ENCODE measurements at regions of chr14 and their contacts with region 1.

Region 1: GRCh38 chr14:54773171-54773975 is 129.3 kb downstream of the GCH1 start:
- DNase-seq: peak; percentile 93
- ATAC-seq: peak; percentile 83
- H3K4me3 Mint-ChIP-seq: peak overlapping the region; percentile 16
- H3K27ac Mint-ChIP-seq: peak overlapping the region; percentile 79
- H3K4me1 Mint-ChIP-seq: peaks cover 47% of the 10 kb centered on the region
- H3K27me3 Mint-ChIP-seq: peaks cover 9% of the 10 kb centered on the region
- CTCF ChIP-seq: no peak

Region 2: DNA sequence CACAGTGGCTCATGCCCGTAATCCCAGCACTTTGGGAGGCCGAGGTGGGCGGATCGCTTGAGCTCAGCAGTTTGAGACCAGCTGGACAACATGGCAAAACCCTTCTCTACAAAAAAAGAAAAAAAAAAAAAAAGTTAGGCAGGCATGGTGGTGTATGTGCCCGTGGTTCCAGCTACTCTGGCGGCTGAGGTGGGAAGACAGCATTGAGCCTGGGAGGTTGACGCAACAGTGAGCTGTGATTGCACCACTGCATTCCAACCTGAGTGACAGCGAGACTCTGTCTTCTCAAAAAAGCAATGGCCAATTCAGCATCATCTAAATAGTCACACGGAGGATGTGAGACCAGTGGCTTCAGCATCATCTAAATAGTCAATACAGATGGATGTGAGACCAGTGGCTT is 216.8 kb before region 1 on chr14:
- CTCF ChIA-PET with region 1: interaction called, 247 read pairs
- POLR2A ChIA-PET with region 1: no interaction called
- intact Hi-C with region 1: no loop called
- DNase-seq: no peak
- ATAC-seq: no peak
- H3K4me3 Mint-ChIP-seq: no peak overlapping the region
- H3K27ac Mint-ChIP-seq: no peak overlapping the region
- H3K4me1 Mint-ChIP-seq: no peaks in the 10 kb centered on the region
- H3K27me3 Mint-ChIP-seq: peaks cover 6% of the 10 kb centered on the region
- CTCF ChIP-seq: no peak

Region 3: GRCh38 chr14:54642801-54643697 is 130.3 kb before region 1 on chr14:
- CTCF ChIA-PET with region 1: interaction called, 21 read pairs
- POLR2A ChIA-PET with region 1: no interaction called
- intact Hi-C with region 1: no loop called
- DNase-seq: peak; percentile 12
- ATAC-seq: no peak
- H3K4me3 Mint-ChIP-seq: no peak overlapping the region
- H3K27ac Mint-ChIP-seq: no peak overlapping the region
- H3K4me1 Mint-ChIP-seq: peaks cover 16% of the 10 kb centered on the region
- H3K27me3 Mint-ChIP-seq: peaks cover 3% of the 10 kb centered on the region
- CTCF ChIP-seq: no peak

Region 4: GRCh38 chr14:54698966-54699530 is 74.3 kb before region 1 on chr14:
- CTCF ChIA-PET with region 1: interaction called, 21 read pairs
- POLR2A ChIA-PET with region 1: no interaction called
- intact Hi-C with region 1: no loop called
- DNase-seq: no peak
- ATAC-seq: no peak
- H3K4me3 Mint-ChIP-seq: no peak overlapping the region
- H3K27ac Mint-ChIP-seq: no peak overlapping the region
- H3K4me1 Mint-ChIP-seq: peaks cover 3% of the 10 kb centered on the region
- H3K27me3 Mint-ChIP-seq: peaks cover 22% of the 10 kb centered on the region
- CTCF ChIP-seq: no peak

Region 5: DNA sequence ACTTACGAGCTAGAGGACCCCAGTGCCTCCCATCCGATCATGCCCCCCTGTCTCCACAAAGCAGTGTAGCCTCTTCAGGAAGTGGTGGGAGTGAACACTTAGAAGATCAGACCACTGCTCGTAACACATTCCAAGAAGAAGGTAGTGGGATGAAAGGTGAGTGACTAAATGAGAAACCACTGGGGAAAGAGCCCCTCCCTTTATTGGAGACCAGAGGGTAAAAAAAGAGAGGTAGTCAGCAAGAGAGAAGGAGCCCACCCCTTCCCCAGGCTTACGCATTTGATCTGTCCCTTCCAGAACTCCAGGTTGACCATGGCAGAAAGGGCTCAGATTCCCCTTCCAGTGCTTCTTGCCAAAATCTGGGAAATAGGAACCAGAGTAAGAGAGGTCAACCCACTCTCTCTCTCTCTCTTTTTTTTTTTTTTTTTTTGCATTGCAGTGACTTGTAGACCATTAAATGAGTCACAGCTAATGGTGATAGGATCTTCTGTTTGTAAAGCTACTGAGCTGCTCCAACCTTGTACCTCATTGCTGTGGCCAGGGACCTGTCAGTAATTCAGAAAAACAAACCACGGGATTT is 36.2 kb before region 1 on chr14:
- CTCF ChIA-PET with region 1: interaction called, 40 read pairs
- POLR2A ChIA-PET with region 1: interaction called, 4 read pairs
- intact Hi-C with region 1: no loop called
- DNase-seq: peak; percentile 60
- ATAC-seq: peak; percentile 81
- H3K4me3 Mint-ChIP-seq: peak overlapping the region; percentile 23
- H3K27ac Mint-ChIP-seq: peak overlapping the region; percentile 86
- H3K4me1 Mint-ChIP-seq: peaks cover 61% of the 10 kb centered on the region
- H3K27me3 Mint-ChIP-seq: peaks cover 7% of the 10 kb centered on the region
- CTCF ChIP-seq: no peak

Region 6: DNA sequence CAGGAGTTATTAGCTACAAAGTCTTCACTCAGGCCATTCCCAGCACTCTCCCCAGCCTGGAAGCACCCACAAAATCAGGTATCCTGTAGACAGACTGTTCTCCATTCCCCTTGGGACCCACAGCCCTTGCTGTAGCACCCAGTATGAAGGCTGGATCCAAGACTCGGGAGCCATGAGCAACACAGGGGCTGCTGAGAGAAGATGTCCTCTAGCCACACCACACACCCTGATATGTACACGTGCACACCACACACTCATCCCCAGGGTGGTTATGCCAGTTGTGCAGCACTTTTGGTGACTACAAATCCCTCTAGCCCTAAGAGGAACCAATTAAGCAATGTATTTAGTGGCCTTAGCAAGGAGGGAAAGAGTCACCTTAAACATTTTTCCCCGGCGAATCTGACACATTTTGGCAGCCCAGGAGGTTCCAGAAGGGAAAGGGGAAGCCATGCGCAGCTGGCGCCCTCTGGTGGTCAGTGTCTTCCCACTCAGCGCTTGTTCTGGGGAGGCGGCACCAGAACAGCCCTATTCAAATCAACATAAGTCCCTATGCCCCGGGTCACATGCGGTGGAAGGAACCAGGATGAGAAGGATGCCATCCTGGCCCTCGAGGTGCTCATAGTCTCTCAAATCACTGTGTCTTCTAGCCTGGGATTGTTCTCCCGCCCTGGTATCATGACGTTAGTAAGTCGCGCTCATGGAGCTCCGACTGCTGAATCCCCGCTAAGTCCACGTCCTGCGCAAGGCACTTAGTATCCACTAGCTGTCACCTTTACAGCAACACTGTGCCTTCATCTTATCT is 32.3 kb after region 1 on chr14:
- CTCF ChIA-PET with region 1: interaction called, 82 read pairs
- POLR2A ChIA-PET with region 1: no interaction called
- intact Hi-C with region 1: loop called (anchors 2 kb)
- DNase-seq: peak; percentile 86
- ATAC-seq: peak; percentile 88
- H3K4me3 Mint-ChIP-seq: no peak overlapping the region
- H3K27ac Mint-ChIP-seq: no peak overlapping the region
- H3K4me1 Mint-ChIP-seq: peaks cover 2% of the 10 kb centered on the region
- H3K27me3 Mint-ChIP-seq: peaks cover 21% of the 10 kb centered on the region
- CTCF ChIP-seq: peak; percentile 93

Region 7: GRCh38 chr14:54920052-54920451 is 146.7 kb after region 1 on chr14:
- CTCF ChIA-PET with region 1: no interaction called
- POLR2A ChIA-PET with region 1: no interaction called
- intact Hi-C with region 1: no loop called
- DNase-seq: no peak
- ATAC-seq: no peak
- H3K4me3 Mint-ChIP-seq: no peak overlapping the region
- H3K27ac Mint-ChIP-seq: no peak overlapping the region
- H3K4me1 Mint-ChIP-seq: no peaks in the 10 kb centered on the region
- H3K27me3 Mint-ChIP-seq: no peaks in the 10 kb centered on the region
- CTCF ChIP-seq: no peak

Measured in activated CD8-positive, alpha-beta T cell treated with anti-CD3 and anti-CD28 coated beads for 36 hours (primary cell).